IMR-90 (cell line): ENCODE measurements at regions of chr7 and their contacts with region 1.

Region 1: DNA sequence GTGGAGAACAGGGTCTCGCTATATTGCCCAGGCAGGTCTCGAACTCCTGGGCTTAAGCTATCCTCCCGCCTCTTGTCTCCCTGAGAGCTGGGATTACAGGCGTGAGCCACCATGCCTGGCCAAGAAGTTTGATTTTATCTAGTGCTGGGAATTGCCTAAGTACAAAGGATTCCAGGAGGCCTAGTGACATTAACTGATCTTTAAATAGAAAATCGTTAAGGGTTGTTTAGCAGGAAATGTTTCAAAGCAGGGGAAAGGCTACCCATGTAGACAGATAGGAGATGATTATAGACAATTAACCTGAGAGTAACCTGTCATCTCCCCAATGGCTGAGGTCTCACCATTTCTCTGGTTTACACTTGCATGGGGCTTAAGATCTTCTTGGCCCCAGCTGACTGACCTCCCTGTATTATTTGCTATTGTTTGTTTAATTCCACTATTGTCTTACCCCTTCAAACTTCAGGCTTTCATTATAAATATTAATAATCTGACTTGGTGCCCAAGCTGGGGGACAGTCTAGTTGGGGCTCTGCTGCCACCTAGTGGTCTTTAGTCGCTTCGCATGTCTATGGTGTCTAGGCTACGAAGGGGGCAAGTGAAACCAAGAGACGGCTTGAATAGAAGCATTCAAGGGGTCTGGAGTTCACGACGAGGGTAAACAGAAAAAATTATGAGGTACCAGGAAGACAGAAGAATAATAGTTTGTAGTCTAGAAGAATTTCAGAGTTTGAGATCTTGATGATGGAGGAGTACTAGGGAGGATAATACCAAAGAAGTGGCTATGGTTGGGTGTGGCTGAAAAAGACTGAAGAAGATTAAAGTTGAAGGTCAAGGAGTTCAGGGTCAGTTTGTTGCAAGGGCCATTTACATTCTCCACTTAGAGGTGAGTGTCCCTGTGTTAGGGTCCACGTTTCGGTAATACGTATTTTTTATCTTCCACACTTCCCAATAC is 40.4 kb upstream of the BPGM start:
- DNase-seq: peak; percentile 67
- ATAC-seq: peak; percentile 95
- H3K4me3 ChIP-seq: no peak overlapping the region
- H3K27ac ChIP-seq: no peak overlapping the region
- H3K4me1 ChIP-seq: peaks cover 3% of the 10 kb centered on the region; the same call in 1 of the 2 replicates
- H3K27me3 ChIP-seq: no peaks in the 10 kb centered on the region
- CTCF ChIP-seq: peak; percentile 94
- POLR2A ChIP-seq: no peak
- RAD21 ChIP-seq: peak; percentile 90

Region 2: GRCh38 chr7:134458806-134459698 is 147.2 kb before region 1 on chr7 and contains the start of gene AKR1B1:
- CTCF ChIA-PET with region 1: no interaction called
- POLR2A ChIA-PET with region 1: no interaction called
- dilution Hi-C with region 1: no loop called
- in situ Hi-C with region 1: no loop called
- intact Hi-C with region 1: loop called (anchors 5 kb)
- DNase-seq: peak; percentile 88
- ATAC-seq: peak; percentile 87
- H3K4me3 ChIP-seq: peak within 1 kb of the TSS; percentile 98
- H3K27ac ChIP-seq: peak within 1 kb of the TSS; percentile 78
- H3K4me1 ChIP-seq: peaks cover 21% of the 10 kb centered on the region
- H3K27me3 ChIP-seq: no peaks in the 10 kb centered on the region
- CTCF ChIP-seq: peak; percentile 67
- POLR2A ChIP-seq: peak; percentile 53; the same call in 1 of the 2 replicates
- RAD21 ChIP-seq: peak; percentile 24; the same call in 1 of the 2 replicates
- total RNA-seq, gene AKR1B1: 72.2 and 90.9 TPM in 2 replicates

Region 3: GRCh38 chr7:134514663-134515062 is 91.6 kb before region 1 on chr7:
- CTCF ChIA-PET with region 1: interaction called, 5 read pairs
- POLR2A ChIA-PET with region 1: interaction called, 3 read pairs
- dilution Hi-C with region 1: no loop called
- in situ Hi-C with region 1: loop called (anchors 5 kb)
- intact Hi-C with region 1: loop called (anchors 1 kb)
- DNase-seq: peak; percentile 83
- ATAC-seq: peak; percentile 66
- H3K4me3 ChIP-seq: no peak overlapping the region
- H3K27ac ChIP-seq: no peak overlapping the region
- H3K4me1 ChIP-seq: peaks cover 2% of the 10 kb centered on the region; the same call in 1 of the 2 replicates
- H3K27me3 ChIP-seq: no peaks in the 10 kb centered on the region
- CTCF ChIP-seq: peak; percentile 80
- POLR2A ChIP-seq: no peak
- RAD21 ChIP-seq: peak; percentile 61

Region 4: DNA sequence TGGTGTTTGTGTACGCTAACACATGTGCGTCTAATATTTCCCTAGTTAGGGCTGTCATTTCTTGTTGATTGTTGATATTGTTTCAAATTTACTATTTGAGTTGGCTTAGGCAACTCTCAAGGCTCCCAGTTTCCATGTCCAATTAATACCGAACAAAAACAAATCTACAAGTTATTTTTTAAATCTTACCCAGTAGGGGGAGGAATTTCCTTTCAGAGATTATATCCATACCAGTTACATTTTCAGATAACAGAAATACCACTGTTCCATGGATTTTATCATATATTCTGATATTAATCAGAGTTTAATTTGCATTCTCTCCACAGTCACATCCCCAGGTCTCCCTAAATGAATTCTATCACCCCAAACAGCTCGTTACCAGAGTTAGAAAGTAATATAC is 86.1 kb before region 1 on chr7:
- CTCF ChIA-PET with region 1: interaction called, 3 read pairs
- POLR2A ChIA-PET with region 1: no interaction called
- dilution Hi-C with region 1: no loop called
- in situ Hi-C with region 1: loop called (anchors 5 kb)
- intact Hi-C with region 1: loop called (anchors 1 kb)
- DNase-seq: peak; percentile 12
- ATAC-seq: peak; percentile 52
- H3K4me3 ChIP-seq: no peak overlapping the region
- H3K27ac ChIP-seq: no peak overlapping the region
- H3K4me1 ChIP-seq: peaks cover 2% of the 10 kb centered on the region; the same call in 1 of the 2 replicates
- H3K27me3 ChIP-seq: no peaks in the 10 kb centered on the region
- CTCF ChIP-seq: peak; percentile 36
- POLR2A ChIP-seq: no peak
- RAD21 ChIP-seq: no peak

Region 5: DNA sequence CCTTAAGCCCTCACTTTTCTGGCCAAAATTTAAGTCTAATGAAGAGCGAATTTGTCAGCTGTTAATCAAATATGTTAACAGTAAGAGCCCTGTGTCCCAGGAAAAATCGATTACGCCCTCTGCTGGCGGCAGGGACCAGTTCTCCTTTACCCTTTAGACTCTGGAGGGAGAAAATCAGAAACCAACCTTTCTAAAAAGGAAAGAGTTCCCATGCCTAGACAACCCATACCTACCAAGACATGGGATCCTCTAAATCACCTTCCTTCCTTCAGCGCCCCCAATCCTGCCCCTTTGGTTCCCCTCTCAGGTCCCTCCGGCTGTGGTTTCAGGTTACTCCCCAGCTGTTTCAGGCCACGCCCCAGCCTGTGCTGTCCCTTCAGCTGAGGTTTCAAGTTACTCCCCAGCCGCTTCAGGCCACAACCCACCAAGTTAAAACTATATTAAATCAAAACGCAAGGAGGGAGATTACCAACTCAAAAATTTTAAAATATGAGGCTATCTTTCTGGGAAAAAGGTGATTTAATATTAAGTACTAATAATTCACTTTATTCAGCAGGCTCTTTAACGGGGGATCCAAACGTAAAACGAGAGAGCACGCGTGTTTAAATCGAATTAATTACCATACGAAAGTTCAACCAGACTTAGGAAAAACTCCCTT is 58.7 kb before region 1 on chr7:
- CTCF ChIA-PET with region 1: interaction called, 10 read pairs
- POLR2A ChIA-PET with region 1: no interaction called
- dilution Hi-C with region 1: no loop called
- in situ Hi-C with region 1: no loop called
- intact Hi-C with region 1: loop called (anchors 1 kb)
- DNase-seq: peak; percentile 74
- ATAC-seq: peak; percentile 97
- H3K4me3 ChIP-seq: peak overlapping the region; percentile 55
- H3K27ac ChIP-seq: peak overlapping the region; percentile 6; the same call in 1 of the 2 replicates
- H3K4me1 ChIP-seq: no peaks in the 10 kb centered on the region
- H3K27me3 ChIP-seq: peaks cover 22% of the 10 kb centered on the region
- CTCF ChIP-seq: peak; percentile 76
- POLR2A ChIP-seq: no peak
- RAD21 ChIP-seq: peak; percentile 53

Region 6: DNA sequence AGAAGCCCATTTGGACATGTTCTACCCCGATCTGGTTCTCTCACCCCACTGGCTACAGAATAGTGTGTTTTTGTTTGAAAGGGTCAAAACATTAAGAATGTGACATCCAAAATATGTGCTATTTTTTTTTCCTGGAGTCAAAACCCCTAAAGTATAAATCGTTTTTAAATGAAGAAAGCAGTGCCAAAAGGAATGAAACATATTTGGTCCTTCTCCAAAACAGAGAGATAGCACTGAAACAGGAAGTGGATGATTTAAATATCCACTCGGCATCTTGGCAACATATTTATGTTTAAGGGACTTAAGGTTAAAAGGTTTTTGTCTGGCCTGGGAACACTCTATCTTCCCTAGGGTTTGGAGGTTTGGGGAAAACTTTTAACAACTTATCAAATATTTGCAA is 205.5 kb after region 1 on chr7:
- CTCF ChIA-PET with region 1: no interaction called
- POLR2A ChIA-PET with region 1: no interaction called
- dilution Hi-C with region 1: no loop called
- in situ Hi-C with region 1: no loop called
- intact Hi-C with region 1: no loop called
- DNase-seq: peak; percentile 60
- ATAC-seq: no peak
- H3K4me3 ChIP-seq: no peak overlapping the region
- H3K27ac ChIP-seq: peak overlapping the region; percentile 37; the same call in 1 of the 2 replicates
- H3K4me1 ChIP-seq: peaks cover 27% of the 10 kb centered on the region
- H3K27me3 ChIP-seq: no peaks in the 10 kb centered on the region
- CTCF ChIP-seq: no peak
- POLR2A ChIP-seq: no peak
- RAD21 ChIP-seq: no peak